A549 (cell line): ENCODE measurements at regions of chr21 and their contacts with region 1.

Region 1: GRCh38 chr21:33360881-33361602 is 36.3 kb downstream of the IFNAR1 start:
- DNase-seq: peak; percentile 70 to 76
- ATAC-seq: peak; percentile 98 to 99
- H3K4me3 ChIP-seq: peak overlapping the region; percentile 42
- H3K27ac ChIP-seq: peak overlapping the region; percentile 74 to 80
- H3K4me1 ChIP-seq: peaks cover 13% of the 10 kb centered on the region
- CTCF ChIP-seq: peak; percentile 67
- EP300 ChIP-seq: no peak
- POLR2A ChIP-seq: no peak
- RAD21 ChIP-seq: peak in 1 of 2 experiments; percentile 54; a peak in 3 of 5 replicates

Region 2: GRCh38 chr21:33308586-33309490 is 52.2 kb before region 1 on chr21:
- CTCF ChIA-PET with region 1: no interaction called
- POLR2A ChIA-PET with region 1: no interaction called
- DNase-seq: no peak
- ATAC-seq: no peak
- H3K4me3 ChIP-seq: no peak overlapping the region
- H3K27ac ChIP-seq: no peak overlapping the region
- H3K4me1 ChIP-seq: no peaks in the 10 kb centered on the region
- CTCF ChIP-seq: no peak
- EP300 ChIP-seq: no peak
- POLR2A ChIP-seq: no peak
- RAD21 ChIP-seq: no peak

Region 3: GRCh38 chr21:33332143-33332542 is 28.9 kb before region 1 on chr21:
- CTCF ChIA-PET with region 1: interaction called, 17 read pairs
- POLR2A ChIA-PET with region 1: no interaction called
- DNase-seq: no peak
- ATAC-seq: no peak
- H3K4me3 ChIP-seq: no peak overlapping the region
- H3K27ac ChIP-seq: no peak overlapping the region
- H3K4me1 ChIP-seq: no peaks in the 10 kb centered on the region
- CTCF ChIP-seq: no peak
- EP300 ChIP-seq: no peak
- POLR2A ChIP-seq: no peak
- RAD21 ChIP-seq: no peak

Region 4: DNA sequence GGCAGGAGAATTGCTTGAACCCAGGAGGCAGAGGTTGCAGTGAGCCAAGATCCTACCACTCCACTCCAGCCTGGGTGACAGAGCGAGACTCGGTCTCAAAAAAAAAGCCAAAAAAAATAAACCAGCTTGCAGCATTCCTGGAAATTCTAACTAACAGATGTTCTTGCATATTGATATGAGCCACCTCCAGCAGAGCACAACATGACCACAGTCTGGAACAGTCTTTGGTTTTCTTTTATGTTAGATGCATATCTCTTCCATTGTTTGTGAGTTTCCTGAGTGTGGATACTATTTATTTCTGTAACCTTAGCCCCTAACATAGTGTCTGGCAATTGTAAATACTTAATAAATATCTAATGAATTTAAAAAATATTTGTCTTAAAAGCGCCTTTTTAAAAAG is 12.3 kb before region 1 on chr21:
- CTCF ChIA-PET with region 1: interaction called, 26 read pairs
- POLR2A ChIA-PET with region 1: no interaction called
- DNase-seq: no peak
- ATAC-seq: no peak
- H3K4me3 ChIP-seq: no peak overlapping the region
- H3K27ac ChIP-seq: no peak overlapping the region
- H3K4me1 ChIP-seq: no peaks in the 10 kb centered on the region
- CTCF ChIP-seq: no peak
- EP300 ChIP-seq: no peak
- POLR2A ChIP-seq: no peak
- RAD21 ChIP-seq: no peak

Region 5: DNA sequence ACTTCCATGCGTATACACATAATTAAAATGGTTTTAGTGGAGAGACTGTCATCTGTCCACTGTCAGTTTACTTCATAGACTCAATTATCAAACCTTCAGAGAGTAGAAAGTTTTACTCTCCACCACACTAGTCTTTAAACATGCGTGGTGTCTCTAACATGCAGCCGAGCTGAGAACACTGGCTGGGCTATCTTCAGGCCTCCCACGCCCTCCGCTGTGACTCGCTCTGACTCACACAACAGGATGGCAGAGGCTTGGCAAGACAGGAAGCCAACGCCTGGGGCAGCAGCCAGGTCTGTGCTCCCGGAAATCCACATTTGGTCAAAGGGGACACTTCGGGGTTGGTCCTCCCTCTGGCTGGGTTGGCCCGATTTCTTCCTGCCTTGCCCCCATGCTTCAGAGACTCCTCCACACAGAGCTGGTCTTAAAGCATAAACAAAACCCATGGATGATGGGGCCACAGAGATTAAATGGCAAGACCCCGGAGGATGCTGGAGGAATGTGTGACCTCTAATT is 19.5 kb after region 1 on chr21:
- CTCF ChIA-PET with region 1: interaction called, 28 read pairs
- POLR2A ChIA-PET with region 1: no interaction called
- DNase-seq: peak; percentile 55 to 95
- ATAC-seq: peak; percentile 95 to 99
- H3K4me3 ChIP-seq: no peak overlapping the region
- H3K27ac ChIP-seq: peak overlapping the region; percentile 73 to 83
- H3K4me1 ChIP-seq: peaks cover 35% of the 10 kb centered on the region
- CTCF ChIP-seq: no peak
- EP300 ChIP-seq: no peak
- POLR2A ChIP-seq: no peak
- RAD21 ChIP-seq: no peak

Region 6: DNA sequence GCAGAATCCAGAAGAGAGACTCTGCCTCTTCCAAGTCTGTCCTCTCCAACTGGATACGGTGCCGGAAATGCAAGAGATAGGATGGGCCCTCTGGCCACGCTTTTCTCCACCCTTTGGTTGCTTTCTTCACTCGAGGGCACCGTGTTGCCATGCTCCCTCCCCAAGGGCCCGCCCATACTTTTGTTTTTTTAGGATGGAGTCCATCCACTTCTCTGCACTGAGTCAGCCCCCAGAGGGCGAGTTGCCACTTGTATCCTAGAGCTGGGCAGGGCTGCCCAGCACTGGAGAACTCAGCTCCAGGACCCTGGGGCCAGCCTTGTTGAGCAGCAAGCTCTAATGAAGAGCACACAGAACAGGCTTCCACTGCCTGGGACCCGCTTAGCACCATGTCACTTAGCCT is 67.6 kb after region 1 on chr21:
- CTCF ChIA-PET with region 1: interaction called, 13 read pairs
- POLR2A ChIA-PET with region 1: no interaction called
- DNase-seq: no peak
- ATAC-seq: peak in 1 of 2 experiments; percentile 70; a peak in 3 of 6 replicates
- H3K4me3 ChIP-seq: no peak overlapping the region
- H3K27ac ChIP-seq: no peak overlapping the region
- H3K4me1 ChIP-seq: peaks cover 13% of the 10 kb centered on the region; the same call in 2 of the 3 replicates
- CTCF ChIP-seq: no peak
- EP300 ChIP-seq: no peak
- POLR2A ChIP-seq: no peak
- RAD21 ChIP-seq: no peak

Region 7: DNA sequence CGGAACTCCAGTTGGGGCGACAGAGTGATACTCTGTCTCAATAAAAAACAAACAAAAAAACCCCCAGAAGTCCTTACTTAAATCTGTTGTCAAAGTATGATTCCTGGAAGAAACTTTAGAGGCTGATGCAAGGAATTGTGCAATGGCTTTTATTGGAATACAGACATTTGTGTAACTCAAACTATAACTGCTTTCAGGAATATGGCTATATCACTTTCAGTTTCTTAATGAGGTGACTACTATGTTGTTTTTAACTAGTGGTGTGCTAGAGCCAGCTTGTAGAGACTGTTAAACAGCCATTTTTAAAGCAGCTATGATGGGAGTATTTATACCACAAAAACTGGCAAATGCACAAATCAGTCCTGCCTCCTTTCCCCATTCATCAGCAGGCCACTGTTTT is 153.2 kb after region 1 on chr21:
- CTCF ChIA-PET with region 1: no interaction called
- POLR2A ChIA-PET with region 1: no interaction called
- DNase-seq: no peak
- ATAC-seq: no peak
- H3K4me3 ChIP-seq: no peak overlapping the region
- H3K27ac ChIP-seq: no peak overlapping the region
- H3K4me1 ChIP-seq: no peaks in the 10 kb centered on the region
- CTCF ChIP-seq: no peak
- EP300 ChIP-seq: no peak
- POLR2A ChIP-seq: no peak
- RAD21 ChIP-seq: no peak

Region 8: DNA sequence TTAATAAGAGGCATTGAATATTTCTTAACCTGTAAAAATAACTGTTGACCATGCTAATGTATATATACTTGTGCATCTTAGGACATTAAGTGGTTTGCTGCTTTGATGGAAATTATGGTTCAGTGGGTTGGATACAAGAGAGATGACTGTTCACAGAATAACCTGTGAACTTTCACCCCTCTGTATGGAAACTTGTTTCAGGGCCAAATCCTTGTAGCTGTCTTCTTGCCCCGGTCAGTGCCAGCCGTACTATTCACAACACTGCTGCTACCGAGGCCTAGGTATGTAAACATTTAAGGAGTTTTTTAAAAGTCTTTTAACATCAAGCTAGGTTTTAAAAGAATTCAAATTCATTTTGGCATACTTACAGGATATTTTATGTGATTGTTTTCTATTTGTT is 211.3 kb after region 1 on chr21:
- CTCF ChIA-PET with region 1: no interaction called
- POLR2A ChIA-PET with region 1: no interaction called
- DNase-seq: no peak
- ATAC-seq: no peak
- H3K4me3 ChIP-seq: no peak overlapping the region
- H3K27ac ChIP-seq: no peak overlapping the region
- H3K4me1 ChIP-seq: peaks cover 16% of the 10 kb centered on the region; the same call in 2 of the 3 replicates
- CTCF ChIP-seq: no peak
- EP300 ChIP-seq: no peak
- POLR2A ChIP-seq: no peak
- RAD21 ChIP-seq: no peak